Activated B cell treated with CpG ODN at 0.5 μM for 24 hours (primary cell): ENCODE measurements at regions of chr13 and their contacts with region 1.

Region 1: GRCh38 chr13:49495783-49496762 is at the start of gene PHF11:
- DNase-seq: peak; percentile 78
- ATAC-seq: peak; percentile 82
- H3K4me3 Mint-ChIP-seq: peak within 1 kb of the TSS; percentile 98
- H3K27ac Mint-ChIP-seq: peak within 1 kb of the TSS; percentile 100
- H3K4me1 Mint-ChIP-seq: peaks cover 44% of the 10 kb centered on the region
- H3K27me3 Mint-ChIP-seq: no peaks in the 10 kb centered on the region
- CTCF ChIP-seq: no peak
- total RNA-seq, gene PHF11: 128 and 148 TPM in 2 replicates

Region 2: DNA sequence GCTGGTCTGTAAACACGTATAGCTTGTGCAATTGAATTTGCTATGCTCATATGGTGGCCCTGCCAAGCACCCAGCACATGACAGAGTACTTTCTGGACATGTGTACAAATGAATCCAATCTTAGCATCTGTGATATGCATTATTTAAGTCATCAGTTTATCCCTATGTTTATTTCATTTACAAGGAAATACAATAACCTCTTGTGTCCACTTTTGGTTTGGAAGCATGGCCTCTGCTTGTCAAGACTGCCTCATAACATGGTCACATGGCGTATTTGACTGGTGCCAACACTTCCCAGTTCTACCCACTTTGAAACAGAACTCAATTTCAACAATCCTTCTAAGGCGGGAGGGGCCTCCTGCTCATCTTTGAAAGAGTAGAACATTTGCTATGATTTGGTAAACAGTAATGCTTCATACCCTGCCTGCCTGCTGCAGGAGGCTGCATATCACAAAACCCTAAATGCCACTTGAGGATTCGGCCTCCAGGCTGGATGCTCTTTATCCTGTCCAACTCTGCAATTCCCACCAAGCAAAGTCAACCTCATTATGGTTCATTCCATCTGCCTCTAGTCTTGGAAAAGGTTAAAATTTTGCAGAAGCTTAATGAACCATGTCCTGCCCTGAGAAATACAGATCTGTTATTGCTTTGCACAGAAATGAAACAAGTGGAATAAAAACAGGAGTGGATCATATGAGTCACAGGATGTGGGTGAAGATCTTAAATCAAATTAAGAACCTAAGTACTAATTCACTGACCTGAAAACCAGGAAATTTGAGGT is 691.1 kb before region 1 on chr13:
- CTCF ChIA-PET with region 1: no interaction called
- POLR2A ChIA-PET with region 1: no interaction called
- intact Hi-C with region 1: no loop called
- DNase-seq: no peak
- ATAC-seq: no peak
- H3K4me3 Mint-ChIP-seq: no peak overlapping the region
- H3K27ac Mint-ChIP-seq: no peak overlapping the region
- H3K4me1 Mint-ChIP-seq: no peaks in the 10 kb centered on the region
- H3K27me3 Mint-ChIP-seq: no peaks in the 10 kb centered on the region
- CTCF ChIP-seq: no peak

Region 3: DNA sequence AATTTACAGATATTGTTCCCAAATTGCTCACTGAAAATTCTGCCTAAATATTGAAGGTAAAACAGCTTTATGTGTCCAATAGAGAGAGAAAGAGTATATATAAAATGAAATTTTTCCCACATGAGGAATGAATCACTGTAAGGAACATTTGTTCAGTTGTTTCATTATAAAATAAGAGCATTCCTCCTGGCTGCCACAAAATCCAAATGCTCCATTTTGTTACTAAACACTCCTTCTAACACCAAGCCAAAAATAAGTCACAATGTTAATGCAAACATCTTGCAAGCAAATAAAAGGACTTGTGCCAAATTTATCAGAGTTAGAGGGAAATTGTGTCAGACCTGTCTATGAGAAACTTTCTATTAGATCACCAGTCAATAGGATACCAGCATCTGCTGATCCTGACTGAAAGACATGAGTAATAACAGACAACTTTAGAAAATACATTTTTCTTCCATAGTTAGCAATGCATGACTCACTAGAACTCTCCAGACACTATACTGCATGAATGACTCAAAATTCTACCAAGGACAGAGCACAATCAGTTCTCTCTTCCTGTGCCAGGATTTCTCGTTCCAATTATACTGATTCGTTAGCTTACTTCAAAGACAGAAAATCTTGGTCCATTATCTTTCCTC is 603.9 kb before region 1 on chr13:
- CTCF ChIA-PET with region 1: no interaction called
- POLR2A ChIA-PET with region 1: no interaction called
- intact Hi-C with region 1: no loop called
- DNase-seq: no peak
- ATAC-seq: no peak
- H3K4me3 Mint-ChIP-seq: no peak overlapping the region
- H3K27ac Mint-ChIP-seq: no peak overlapping the region
- H3K4me1 Mint-ChIP-seq: no peaks in the 10 kb centered on the region
- H3K27me3 Mint-ChIP-seq: peaks cover 4% of the 10 kb centered on the region
- CTCF ChIP-seq: no peak

Region 4: GRCh38 chr13:49278211-49278610 is 217.9 kb before region 1 on chr13:
- CTCF ChIA-PET with region 1: no interaction called
- POLR2A ChIA-PET with region 1: no interaction called
- intact Hi-C with region 1: no loop called
- DNase-seq: no peak
- ATAC-seq: no peak
- H3K4me3 Mint-ChIP-seq: no peak overlapping the region
- H3K27ac Mint-ChIP-seq: no peak overlapping the region
- H3K4me1 Mint-ChIP-seq: no peaks in the 10 kb centered on the region
- H3K27me3 Mint-ChIP-seq: no peaks in the 10 kb centered on the region
- CTCF ChIP-seq: no peak

Region 5: GRCh38 chr13:49511736-49512135 is 15.7 kb after region 1 on chr13:
- CTCF ChIA-PET with region 1: no interaction called
- POLR2A ChIA-PET with region 1: interaction called, 15 read pairs
- intact Hi-C with region 1: loop called (anchors 2 kb)
- DNase-seq: no peak
- ATAC-seq: no peak
- H3K4me3 Mint-ChIP-seq: no peak overlapping the region
- H3K27ac Mint-ChIP-seq: no peak overlapping the region
- H3K4me1 Mint-ChIP-seq: peaks cover 2% of the 10 kb centered on the region
- H3K27me3 Mint-ChIP-seq: no peaks in the 10 kb centered on the region
- CTCF ChIP-seq: no peak

Region 6: GRCh38 chr13:49530457-49530856 is 34.4 kb after region 1 on chr13:
- CTCF ChIA-PET with region 1: no interaction called
- POLR2A ChIA-PET with region 1: interaction called, 32 read pairs
- intact Hi-C with region 1: loop called (anchors 1 kb)
- DNase-seq: peak; percentile 30
- ATAC-seq: peak; percentile 88
- H3K4me3 Mint-ChIP-seq: peak overlapping the region; percentile 67
- H3K27ac Mint-ChIP-seq: peak overlapping the region; percentile 89
- H3K4me1 Mint-ChIP-seq: peaks cover 73% of the 10 kb centered on the region
- H3K27me3 Mint-ChIP-seq: no peaks in the 10 kb centered on the region
- CTCF ChIP-seq: no peak

Region 7: GRCh38 chr13:49585220-49586157 is 89.4 kb after region 1 on chr13 and contains the start of gene RCBTB1:
- CTCF ChIA-PET with region 1: interaction called, 3 read pairs
- POLR2A ChIA-PET with region 1: interaction called, 28 read pairs
- intact Hi-C with region 1: loop called (anchors 1 kb)
- DNase-seq: peak; percentile 73
- ATAC-seq: peak; percentile 87
- H3K4me3 Mint-ChIP-seq: peak within 1 kb of the TSS; percentile 90
- H3K27ac Mint-ChIP-seq: peak within 1 kb of the TSS; percentile 86
- H3K4me1 Mint-ChIP-seq: peaks cover 31% of the 10 kb centered on the region
- H3K27me3 Mint-ChIP-seq: no peaks in the 10 kb centered on the region
- CTCF ChIP-seq: no peak
- total RNA-seq, gene RCBTB1: 19.7 and 22.6 TPM in 2 replicates

Region 8: GRCh38 chr13:49792550-49793324 is 296.7 kb after region 1 on chr13 and contains the start of gene KPNA3:
- CTCF ChIA-PET with region 1: no interaction called
- POLR2A ChIA-PET with region 1: interaction called, 5 read pairs
- intact Hi-C with region 1: loop called (anchors 2 kb)
- DNase-seq: peak; percentile 88
- ATAC-seq: peak; percentile 89
- H3K4me3 Mint-ChIP-seq: peak within 1 kb of the TSS; percentile 97
- H3K27ac Mint-ChIP-seq: peak within 1 kb of the TSS; percentile 97
- H3K4me1 Mint-ChIP-seq: peaks cover 31% of the 10 kb centered on the region
- H3K27me3 Mint-ChIP-seq: no peaks in the 10 kb centered on the region
- CTCF ChIP-seq: no peak
- total RNA-seq, gene KPNA3: 28.6 and 28.7 TPM in 2 replicates